Colonic mucosa (tissue), 4 donors: ENCODE measurements at regions of chr19 and their contacts with region 1.

Region 1: GRCh38 chr19:34972163-34972705 is 8.2 kb upstream of the ZNF792 start:
- DNase-seq: peak; percentile 13
- H3K4me3 ChIP-seq: no peak overlapping the region
- H3K27ac ChIP-seq: no peak overlapping the region
- H3K4me1 ChIP-seq: no peaks in the 10 kb centered on the region
- H3K27me3 ChIP-seq: no peaks in the 10 kb centered on the region
- CTCF ChIP-seq: no peak

Region 2: GRCh38 chr19:35013031-35013819 is 41.0 kb after region 1 on chr19:
- intact Hi-C with region 1: loop called (anchors 1 kb)
- DNase-seq: peak; percentile 78
- H3K4me3 ChIP-seq: no peak overlapping the region
- H3K27ac ChIP-seq: no peak overlapping the region
- H3K4me1 ChIP-seq: no peaks in the 10 kb centered on the region
- H3K27me3 ChIP-seq: no peaks in the 10 kb centered on the region
- CTCF ChIP-seq: peak; percentile 99